Uterus (tissue), 4 donors: ENCODE measurements at regions of chr16 and their contacts with region 1.

Region 1: DNA sequence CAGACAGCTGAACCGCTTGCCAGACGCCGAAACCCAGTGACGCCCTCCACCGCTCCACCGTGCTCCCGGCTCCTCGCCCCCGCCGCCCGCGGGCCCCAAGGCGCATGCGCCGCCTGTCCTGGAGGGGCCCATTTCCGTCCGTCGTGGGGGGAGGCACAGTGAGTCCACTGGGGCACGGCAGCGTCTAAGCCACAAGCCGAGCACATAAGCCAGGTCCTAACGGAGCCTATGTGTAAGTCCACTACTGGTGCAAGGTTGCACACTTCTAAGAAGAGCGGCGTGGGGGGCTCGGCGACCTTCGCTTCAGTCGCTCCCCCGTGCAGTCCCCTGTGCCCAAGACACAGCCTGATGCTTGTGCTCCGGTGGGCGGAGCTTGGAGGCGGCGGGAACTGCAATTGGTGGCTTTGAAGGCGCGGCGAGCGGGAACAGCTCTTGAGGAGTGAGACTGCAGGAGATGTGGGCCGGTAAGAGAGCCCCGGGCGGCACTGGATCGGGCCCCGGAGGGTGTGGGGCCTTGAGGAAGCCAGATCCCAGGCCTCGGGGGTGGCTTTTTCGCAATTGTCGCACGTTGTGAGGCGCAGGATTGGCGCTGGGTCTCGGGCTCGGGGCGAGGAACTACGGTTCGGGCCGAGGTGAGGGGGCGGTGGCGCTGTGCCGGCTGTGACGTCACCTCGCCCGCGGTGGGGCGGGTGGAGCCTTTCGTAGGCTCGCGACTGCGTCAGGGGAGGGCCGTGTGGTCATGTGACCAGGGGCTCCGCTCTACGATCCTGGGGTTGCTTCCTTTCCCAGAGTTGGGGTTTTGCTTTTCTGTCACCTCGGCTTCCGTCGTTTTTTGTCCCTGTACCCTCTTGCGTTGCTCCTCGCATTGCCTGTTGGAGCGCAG is at the starts of genes CENPN and CMC2:
- DNase-seq: peak; percentile 99
- H3K4me3 ChIP-seq: peak within 1 kb of the TSS; percentile 81 to 92
- H3K27ac ChIP-seq: peak within 1 kb of the TSS; percentile 95 to 98
- H3K4me1 ChIP-seq: peaks cover 4 to 5% of the 10 kb centered on the region in 2 donors
- H3K27me3 ChIP-seq: no peaks in the 10 kb centered on the region
- CTCF ChIP-seq: peak in 3 of 4 experiments; percentile 20 to 38 (median 30)
- POLR2A ChIP-seq: peak; percentile 78 to 86
- total RNA-seq, gene CENPN: 2.8 to 20.0 TPM in 2 of 4 donors, not detected in the others
- total RNA-seq, gene CMC2: 1.5 to 204 (median 23.6) TPM

Region 2: GRCh38 chr16:80931801-80932712 is 75.0 kb before region 1 on chr16:
- intact Hi-C with region 1: loop called (anchors 10 kb)
- DNase-seq: peak; percentile 64 to 90
- H3K4me3 ChIP-seq: peak overlapping the region; percentile 34 to 41
- H3K27ac ChIP-seq: peak overlapping the region; percentile 75 to 82
- H3K4me1 ChIP-seq: peaks cover 0 to 7% of the 10 kb centered on the region in 2 donors
- H3K27me3 ChIP-seq: no peaks in the 10 kb centered on the region
- CTCF ChIP-seq: peak in 1 of 4 experiments; percentile 4
- POLR2A ChIP-seq: no peak

Region 3: DNA sequence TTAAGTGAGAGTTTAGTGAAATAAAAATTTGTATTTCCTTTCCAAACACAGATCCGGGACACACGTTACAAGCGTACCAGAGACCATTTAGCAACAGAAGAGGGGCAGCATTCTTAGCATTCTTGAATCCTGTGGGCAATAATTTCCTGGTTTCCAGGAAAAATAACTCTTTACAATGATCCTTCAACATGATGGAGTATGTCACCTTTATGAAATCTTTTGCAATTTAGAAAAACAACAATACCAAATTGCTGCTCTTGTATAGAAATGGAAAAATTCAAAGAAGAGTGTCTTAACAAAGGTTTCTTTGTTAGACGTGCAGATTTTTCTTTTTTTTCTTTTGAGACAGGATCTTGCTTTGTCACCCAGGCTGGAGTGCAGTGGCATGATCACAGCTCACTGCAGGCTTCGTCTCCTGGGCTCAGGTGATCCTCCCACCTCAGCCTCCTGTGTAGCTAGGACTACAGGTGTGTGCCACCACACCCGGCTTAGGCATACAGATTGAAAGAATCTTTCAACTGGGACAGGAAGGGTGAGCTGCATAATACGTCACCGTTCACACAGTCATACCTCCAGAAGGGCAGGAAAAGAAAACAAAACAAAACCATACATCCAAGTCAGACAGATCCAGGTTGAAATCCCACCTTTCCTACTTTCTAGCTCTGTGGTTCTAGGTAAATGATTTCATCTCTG is 99.9 kb after region 1 on chr16:
- intact Hi-C with region 1: no loop called
- DNase-seq: no peak
- H3K4me3 ChIP-seq: no peak overlapping the region
- H3K27ac ChIP-seq: no peak overlapping the region
- H3K4me1 ChIP-seq: no peaks in the 10 kb centered on the region
- H3K27me3 ChIP-seq: no peaks in the 10 kb centered on the region
- CTCF ChIP-seq: no peak
- POLR2A ChIP-seq: no peak